ENCODE measurements at regions of chr10 and their contacts with region 1.

Region 1: DNA sequence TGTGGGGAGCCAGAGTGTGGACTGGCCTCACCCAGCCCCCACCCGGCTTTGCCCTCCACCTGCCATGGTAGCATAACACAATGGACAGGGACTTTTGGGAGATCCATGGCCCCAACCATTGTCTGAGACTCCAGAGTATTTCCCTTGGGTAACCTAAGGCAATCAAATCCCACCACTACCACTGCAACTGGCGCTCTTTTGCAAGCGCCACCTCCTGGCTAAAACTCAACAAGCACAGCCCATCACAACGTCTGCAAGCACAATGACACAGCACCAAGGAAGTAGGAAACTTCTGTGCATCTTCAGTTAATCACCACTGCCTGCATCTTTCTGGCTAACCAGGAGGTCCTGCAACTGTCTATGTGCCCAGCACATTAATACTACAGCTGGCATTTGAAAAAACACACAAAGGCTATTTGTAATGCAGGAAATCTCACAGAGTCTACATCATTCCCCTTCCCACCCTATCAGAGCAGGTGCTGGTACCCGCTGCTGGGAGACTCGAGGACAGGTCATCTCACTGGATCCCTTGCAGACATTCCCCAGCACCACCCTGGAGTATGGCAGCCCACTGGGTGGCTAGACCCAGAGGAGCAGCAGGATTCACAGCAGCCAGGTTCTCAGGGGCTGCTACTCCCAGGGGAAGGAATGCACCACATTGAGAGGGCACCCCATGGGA is 27.7 kb downstream of the ANKRD26 start:
- DNase-seq: peak in 1 of 2 experiments; percentile 27
- ATAC-seq: peak; percentile 34 to 62; a peak in 4 of 6 replicates
- H3K4me3 ChIP-seq: no peak overlapping the region
- H3K27ac ChIP-seq: no peak overlapping the region
- H3K4me1 ChIP-seq: no peaks in the 10 kb centered on the region
- CTCF ChIP-seq: no peak
- EP300 ChIP-seq: no peak
- POLR2A ChIP-seq: no peak
- RAD21 ChIP-seq: no peak

Region 2: GRCh38 chr10:27052646-27053045 is 19.9 kb before region 1 on chr10:
- CTCF ChIA-PET with region 1: interaction called, 3 read pairs
- POLR2A ChIA-PET with region 1: interaction called, 11 read pairs
- DNase-seq: no peak
- ATAC-seq: no peak
- H3K4me3 ChIP-seq: no peak overlapping the region
- H3K27ac ChIP-seq: no peak overlapping the region
- H3K4me1 ChIP-seq: no peaks in the 10 kb centered on the region
- CTCF ChIP-seq: no peak
- EP300 ChIP-seq: no peak
- POLR2A ChIP-seq: no peak
- RAD21 ChIP-seq: no peak